ENCODE measurements at regions of chr2 and their contacts with region 1.

Region 1: GRCh38 chr2:192162392-192163042 is 32.2 kb downstream of the TMEFF2 start:
- DNase-seq: peak in 1 of 3 donors; percentile 91
- ATAC-seq: peak; percentile 88
- H3K4me3 ChIP-seq: no peak overlapping the region
- H3K4me1 ChIP-seq: no peaks in the 10 kb centered on the region
- CTCF ChIP-seq: peak; percentile 70

Region 2: GRCh38 chr2:191555092-191555742 is 607.3 kb before region 1 on chr2:
- intact Hi-C with region 1: loop called (anchors 5 to 10 kb)
- DNase-seq: peak in 2 of 3 donors; percentile 83 to 96
- ATAC-seq: peak; percentile 97
- H3K4me3 ChIP-seq: no peak overlapping the region
- H3K4me1 ChIP-seq: peaks cover 6% of the 10 kb centered on the region
- CTCF ChIP-seq: peak; percentile 43

Region 3: DNA sequence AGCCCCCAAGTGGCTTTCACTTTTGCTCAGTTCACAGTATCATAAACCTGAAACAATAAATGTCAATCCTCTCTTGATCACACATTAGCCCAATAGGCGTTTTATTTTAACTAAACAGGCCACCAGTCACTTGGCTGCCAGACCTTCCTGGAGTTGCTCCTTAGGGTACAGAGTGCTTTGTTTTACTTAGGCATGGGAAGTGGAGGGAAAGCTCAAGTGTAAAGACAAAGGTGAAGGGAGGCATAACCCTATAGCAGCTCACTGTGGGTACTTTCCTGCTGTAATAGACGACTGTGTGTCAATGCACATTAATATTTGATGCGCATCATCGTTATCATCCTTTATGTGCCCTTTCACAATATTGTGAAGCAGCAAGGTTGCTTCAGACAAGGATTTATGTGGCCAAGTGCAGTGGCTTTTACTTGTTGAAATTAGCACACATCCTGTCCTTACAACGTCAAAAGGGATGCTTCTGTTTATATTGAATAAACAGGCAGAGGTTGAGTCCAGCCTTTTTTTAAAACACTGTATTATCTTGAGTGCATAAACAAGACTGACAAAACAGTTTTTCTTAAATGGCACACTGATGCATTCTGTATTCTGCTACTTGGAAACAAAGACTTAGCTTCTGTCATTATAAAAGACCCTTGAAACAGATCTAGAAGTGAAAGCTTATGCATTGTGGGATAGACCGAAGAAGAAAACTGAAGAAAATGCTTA is 136.3 kb before region 1 on chr2:
- intact Hi-C with region 1: no loop called
- DNase-seq: no peak
- ATAC-seq: no peak
- H3K4me3 ChIP-seq: no peak overlapping the region
- H3K4me1 ChIP-seq: no peaks in the 10 kb centered on the region
- CTCF ChIP-seq: no peak

Measured in mucosa of descending colon (tissue), 3 donors.